ENCODE measurements at regions of chr10 and their contacts with region 1.

Region 1: GRCh38 chr10:78029269-78030226 is at the start of gene POLR3A:
- DNase-seq: peak; percentile 94
- H3K4me3 Mint-ChIP-seq: peak within 1 kb of the TSS; percentile 98
- H3K27ac Mint-ChIP-seq: peak within 1 kb of the TSS; percentile 93
- H3K4me1 Mint-ChIP-seq: peaks cover 38% of the 10 kb centered on the region
- H3K27me3 Mint-ChIP-seq: no peaks in the 10 kb centered on the region
- total RNA-seq, gene POLR3A: 14.1 to 14.2 TPM

Region 2: DNA sequence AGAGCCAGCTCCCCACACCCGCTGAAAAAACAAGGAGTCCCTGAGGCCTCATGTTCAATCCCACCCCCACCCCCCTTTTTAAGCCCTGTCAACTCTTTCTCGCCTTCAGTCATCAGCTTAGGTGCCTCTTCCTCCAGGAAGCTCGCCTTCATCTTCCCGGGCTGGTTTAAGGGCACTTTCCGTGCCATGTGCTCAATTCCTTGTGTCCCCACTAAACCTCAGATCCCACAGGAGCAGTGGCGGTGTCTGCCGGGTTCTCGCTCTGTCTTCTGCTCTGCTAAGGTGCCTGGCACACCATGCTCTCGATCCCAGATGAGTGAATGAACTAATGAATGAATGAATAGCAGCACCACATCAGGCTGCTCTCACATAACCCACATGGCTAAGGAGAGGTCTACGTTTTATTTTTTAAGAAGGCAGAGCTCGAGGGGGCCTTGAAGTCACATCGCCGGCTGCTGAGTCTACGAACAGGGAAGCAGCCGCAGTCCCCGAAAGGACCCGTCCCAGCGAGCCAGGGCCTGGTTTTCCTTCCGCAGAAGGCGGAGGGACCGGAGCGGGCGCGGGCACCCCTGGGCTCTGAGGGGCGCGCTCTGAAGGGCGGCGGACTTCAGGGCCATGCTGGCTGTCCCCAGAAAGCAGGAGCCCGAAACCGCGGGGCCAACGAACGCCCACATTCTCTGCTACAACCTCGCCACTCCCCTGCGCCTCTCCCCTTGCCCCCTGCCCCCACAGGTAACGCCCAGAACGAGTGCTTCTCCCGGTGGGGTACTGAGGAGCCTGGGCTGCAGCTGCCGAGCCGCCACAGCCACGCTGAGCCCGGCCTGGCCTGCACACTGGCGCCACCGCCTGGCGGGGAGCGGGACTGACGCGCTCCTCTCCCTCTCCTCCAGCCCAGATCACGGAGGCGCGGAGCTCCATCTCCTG is 318.5 kb before region 1 on chr10:
- CTCF ChIA-PET with region 1: no interaction called
- intact Hi-C with region 1: loop called (anchors 5 kb)
- DNase-seq: peak; percentile 73
- H3K4me3 Mint-ChIP-seq: peak overlapping the region; percentile 49
- H3K27ac Mint-ChIP-seq: no peak overlapping the region
- H3K4me1 Mint-ChIP-seq: peaks cover 6% of the 10 kb centered on the region
- H3K27me3 Mint-ChIP-seq: peaks cover 25% of the 10 kb centered on the region

Region 3: DNA sequence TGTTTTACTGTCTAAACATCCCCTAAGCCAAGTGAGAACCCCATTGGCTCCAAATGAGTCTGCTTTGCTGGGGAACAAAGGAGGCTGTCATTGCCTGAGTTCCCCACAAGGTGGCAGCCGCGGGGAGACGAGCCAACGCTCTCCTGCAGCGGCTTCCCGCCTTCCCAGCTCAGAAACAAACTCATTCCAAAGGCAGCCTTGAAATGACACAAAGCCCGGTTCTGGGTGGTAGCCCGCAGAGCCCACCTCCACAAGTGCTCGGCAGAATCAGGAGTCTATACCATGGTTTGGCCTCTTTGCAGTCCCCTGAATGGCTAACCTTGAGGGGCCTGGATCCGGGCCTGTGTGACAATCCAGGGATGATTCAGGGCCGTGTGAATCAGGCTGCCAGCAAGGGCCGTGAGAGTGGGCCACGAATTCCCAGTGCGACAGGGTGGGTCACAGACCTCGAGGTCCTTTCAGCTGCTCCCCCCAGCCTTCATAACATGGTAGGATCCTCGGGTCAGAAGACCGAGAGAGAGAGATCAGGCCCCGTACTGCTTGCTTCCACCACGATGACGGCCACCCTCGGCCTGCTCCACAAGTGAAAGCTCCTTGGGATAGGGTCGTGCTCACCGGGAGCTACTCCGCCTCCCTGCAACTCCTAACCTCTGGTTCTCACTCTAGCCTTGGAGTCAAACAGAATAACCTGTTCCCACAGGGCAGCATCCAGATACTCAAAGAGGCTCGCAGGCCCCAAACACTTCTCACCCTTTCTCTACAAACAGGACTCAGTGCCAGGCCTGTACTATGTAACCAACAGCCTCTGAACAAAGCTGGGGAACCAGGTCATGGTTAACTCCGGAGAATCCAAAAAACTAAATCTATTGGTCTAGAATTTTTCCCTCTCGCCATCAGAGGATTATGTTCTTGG is 182.6 kb before region 1 on chr10:
- CTCF ChIA-PET with region 1: no interaction called
- intact Hi-C with region 1: loop called (anchors 2 kb)
- DNase-seq: peak; percentile 76
- H3K4me3 Mint-ChIP-seq: no peak overlapping the region
- H3K27ac Mint-ChIP-seq: no peak overlapping the region
- H3K4me1 Mint-ChIP-seq: peaks cover 3% of the 10 kb centered on the region
- H3K27me3 Mint-ChIP-seq: no peaks in the 10 kb centered on the region

Region 4: DNA sequence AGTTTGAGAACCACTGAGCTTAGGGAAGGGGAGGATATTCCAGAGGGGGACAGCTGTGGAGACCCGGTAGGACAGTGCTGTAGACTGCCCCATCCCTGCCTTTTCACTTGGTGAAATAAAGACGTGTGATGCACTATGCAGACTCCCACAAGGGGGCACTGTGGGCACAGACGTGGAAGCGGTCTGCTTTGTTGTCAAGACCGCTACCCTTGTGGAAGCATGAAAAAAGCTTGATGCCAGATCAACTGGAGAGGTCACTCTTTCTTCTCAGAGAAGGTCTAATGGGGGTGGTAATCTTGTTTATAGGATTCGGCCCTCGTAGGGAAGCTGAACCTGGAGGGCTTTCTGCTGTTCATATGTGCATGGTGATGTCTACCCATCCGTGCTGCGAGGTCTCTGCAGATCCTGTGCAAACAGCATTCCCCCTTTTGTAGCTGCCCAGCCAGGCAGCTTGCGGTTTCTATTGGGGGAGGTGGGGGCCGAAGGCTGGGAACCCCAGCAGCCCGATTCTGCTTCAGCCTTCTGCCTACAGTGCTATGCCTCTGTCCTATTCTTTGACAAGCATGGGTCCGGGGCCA is 17.9 kb after region 1 on chr10:
- CTCF ChIA-PET with region 1: interaction called, 12 read pairs
- intact Hi-C with region 1: no loop called
- DNase-seq: peak; percentile 90
- H3K4me3 Mint-ChIP-seq: no peak overlapping the region
- H3K27ac Mint-ChIP-seq: no peak overlapping the region
- H3K4me1 Mint-ChIP-seq: peaks cover 26% of the 10 kb centered on the region
- H3K27me3 Mint-ChIP-seq: no peaks in the 10 kb centered on the region

Region 5: DNA sequence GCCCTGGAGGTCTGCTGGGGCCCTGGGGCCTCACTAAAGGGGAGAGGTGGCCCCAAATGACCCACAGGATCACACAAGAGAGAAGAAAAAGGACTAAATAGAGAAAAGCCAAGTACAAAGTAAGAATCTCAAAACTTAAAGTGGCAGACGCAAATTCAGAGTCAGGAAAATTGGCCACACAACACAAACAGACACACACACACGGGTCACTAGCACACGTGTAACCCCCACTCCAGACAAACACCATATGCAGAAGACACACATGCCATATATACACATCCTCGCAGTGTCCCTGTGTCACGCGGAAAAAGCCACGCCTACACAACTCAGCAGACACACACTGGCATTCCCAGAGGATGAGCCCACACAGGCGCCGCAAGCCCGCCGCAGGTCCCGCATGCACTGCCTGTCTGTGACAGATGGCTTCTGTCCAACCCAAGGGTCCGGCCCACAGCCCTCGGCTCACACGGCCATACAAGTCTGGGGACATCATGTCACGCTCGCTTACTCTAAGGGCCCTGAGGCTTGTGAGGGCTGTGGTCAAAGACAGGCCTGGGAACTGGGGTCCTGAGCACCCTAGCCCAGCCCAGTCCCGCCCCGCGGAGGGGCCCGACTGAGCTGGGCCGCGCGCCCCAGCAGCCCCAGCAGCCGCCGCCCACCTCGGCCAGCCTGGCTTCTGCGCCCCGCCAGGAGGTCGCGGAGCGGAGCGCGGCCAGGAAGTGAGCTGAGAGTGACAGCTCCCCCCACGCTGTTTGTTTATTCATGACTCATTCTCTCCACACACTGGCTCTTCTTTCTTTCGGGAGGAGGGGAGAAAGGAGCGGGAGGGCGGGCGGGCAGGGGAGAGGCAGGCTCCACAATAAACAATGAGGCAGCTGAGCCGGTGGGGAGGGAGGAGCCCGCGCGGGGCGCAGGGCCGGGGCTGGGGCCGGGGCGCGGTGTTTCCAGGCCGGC is 943.7 kb after region 1 on chr10:
- CTCF ChIA-PET with region 1: no interaction called
- intact Hi-C with region 1: loop called (anchors 5 kb)
- DNase-seq: peak; percentile 80
- H3K4me3 Mint-ChIP-seq: peak overlapping the region; percentile 37
- H3K27ac Mint-ChIP-seq: peak overlapping the region; percentile 8
- H3K4me1 Mint-ChIP-seq: peaks cover 9% of the 10 kb centered on the region
- H3K27me3 Mint-ChIP-seq: no peaks in the 10 kb centered on the region

Region 6: DNA sequence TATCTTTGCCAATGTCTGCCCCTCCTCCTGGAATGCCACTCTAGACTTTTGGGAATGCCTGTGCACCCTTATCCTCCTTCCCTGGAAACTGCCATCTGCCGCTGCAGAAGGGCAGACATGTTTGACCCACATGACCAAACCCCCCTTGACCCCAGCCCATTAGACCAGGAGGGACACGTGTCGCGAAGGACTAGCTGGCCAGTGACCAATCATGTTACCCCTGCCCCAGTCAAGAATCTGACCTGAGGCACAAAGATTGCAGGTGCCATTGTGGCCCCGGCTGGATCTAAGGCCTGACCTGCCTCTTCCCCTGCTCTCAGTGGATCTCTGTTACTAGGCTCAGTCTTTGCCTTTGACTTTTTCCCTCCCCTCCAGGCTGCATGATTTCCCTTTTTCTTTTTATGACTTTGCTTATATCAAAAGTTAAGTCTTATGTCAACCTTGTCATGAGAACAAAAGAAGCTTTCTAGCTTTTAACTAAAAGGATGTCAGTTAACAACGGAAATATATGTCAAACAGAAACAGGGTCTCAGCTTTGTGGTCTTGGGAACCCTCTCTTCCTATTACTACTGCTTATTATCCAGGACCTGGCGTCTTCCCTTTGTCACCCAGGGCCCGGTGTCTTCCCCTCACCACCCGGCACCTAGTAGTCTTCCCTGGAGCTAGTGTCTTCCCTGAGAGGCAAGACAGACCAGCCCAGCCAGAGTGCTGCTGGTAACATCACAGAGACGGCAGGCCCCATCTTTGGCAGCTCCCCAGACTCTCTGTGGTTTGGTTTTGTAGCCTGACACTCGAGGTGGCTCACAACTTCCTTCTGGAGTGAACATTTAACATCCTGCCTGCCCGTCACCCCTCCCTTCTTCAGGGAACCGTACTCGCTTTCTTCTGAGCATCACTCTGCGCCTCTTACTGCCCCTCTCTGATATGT is 1293.3 kb after region 1 on chr10:
- CTCF ChIA-PET with region 1: no interaction called
- intact Hi-C with region 1: loop called (anchors 5 kb)
- DNase-seq: peak; percentile 95
- H3K4me3 Mint-ChIP-seq: peak overlapping the region; percentile 33
- H3K27ac Mint-ChIP-seq: peak overlapping the region; percentile 92
- H3K4me1 Mint-ChIP-seq: peaks cover 68% of the 10 kb centered on the region
- H3K27me3 Mint-ChIP-seq: no peaks in the 10 kb centered on the region

Measured in activated naive CD4-positive, alpha-beta T cell treated with anti-CD3 and anti-CD28 coated beads for 36 hours (primary cell).